Body of pancreas (tissue), 4 donors: ENCODE measurements at regions of chr10 and their contacts with region 1.

Region 1: DNA sequence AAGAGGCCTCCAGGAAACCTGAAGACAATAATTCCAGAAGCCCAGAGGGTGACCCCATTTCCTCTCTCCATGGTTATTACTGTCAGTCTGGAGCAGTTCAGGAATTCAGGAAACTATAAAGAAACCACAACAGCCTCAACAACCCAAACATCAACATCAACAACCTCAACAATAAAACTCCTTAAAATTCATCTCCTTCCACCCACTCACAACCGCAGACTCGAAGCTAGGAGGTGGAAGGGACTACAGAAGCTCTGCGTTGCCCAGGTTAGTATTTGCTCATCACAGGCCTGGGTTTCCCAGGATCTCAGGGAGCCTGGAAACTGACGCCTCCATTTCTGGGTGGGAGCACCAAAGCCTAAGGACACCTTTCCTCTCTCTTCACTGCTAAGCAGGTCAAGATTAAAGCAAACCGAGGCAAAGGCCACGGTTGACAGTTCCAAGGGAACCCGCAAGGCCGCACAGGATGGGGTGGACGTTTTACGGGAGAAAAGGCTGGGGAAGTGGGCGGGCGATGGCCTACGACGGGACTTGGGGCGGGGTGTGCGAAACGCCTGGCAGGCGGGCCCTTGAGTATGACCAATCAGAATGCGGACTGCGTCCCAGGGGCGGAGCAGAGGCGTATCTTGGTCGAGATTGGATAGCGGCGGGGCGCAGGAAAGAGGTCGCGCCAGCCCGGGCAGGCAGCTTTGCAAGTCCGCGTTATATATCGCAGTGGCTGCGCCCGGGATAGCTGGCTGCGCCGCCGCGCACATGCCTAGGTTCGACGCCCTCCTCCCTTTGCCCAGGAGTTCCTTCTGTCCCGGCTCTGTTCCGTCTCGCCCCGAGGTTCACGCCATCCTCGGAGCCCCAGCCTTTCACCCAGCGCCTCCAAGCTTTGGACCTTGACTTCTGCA is at the start of gene ELOVL3:
- DNase-seq: peak; percentile 92 to 96 (median 94)
- ATAC-seq: peak; percentile 94
- H3K4me3 ChIP-seq: no peak within 1 kb of the TSS
- H3K27ac ChIP-seq: peak within 1 kb of the TSS in 3 of 4 donors; percentile 34 to 60 (median 47)
- H3K4me1 ChIP-seq: peaks cover 25% of the 10 kb centered on the region
- H3K27me3 ChIP-seq: peaks cover 0 to 4% of the 10 kb centered on the region in 2 donors
- CTCF ChIP-seq: peak in 3 of 7 experiments; percentile 17 to 29 (median 20)
- POLR2A ChIP-seq: peak in 1 of 3 donors; percentile 29
- total RNA-seq, gene ELOVL3: not detected

Region 2: DNA sequence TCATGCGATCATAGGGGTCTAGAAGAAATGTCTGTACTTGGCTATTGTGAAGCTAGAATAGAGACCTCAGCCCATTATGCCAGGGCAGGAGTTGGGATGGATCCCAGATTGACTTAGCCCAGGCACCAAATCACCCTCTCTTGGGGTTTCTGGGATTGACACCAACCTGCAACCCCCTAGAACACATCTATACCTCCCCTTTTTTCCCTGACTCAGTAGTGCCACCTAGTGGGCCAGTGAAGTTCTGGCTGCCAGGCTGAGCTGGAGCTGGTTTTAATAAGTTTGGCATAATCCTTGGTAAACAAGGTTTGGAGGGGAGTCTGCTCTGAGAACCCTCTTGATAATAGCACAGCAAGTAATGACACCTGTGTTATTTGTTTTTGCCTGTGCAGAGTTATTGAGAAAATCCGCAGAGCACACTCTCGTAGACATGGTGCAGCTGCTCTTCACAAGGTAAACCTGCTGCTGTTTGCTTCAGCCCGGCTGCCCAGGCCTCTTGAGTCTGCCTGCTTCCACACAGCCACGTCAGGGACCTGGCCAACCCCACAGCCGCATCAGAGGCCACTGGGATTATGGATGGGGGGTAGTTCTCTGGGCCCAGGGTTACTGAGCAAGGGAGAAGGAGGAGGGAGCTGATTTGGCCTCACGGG is 126.3 kb after region 1 on chr10:
- intact Hi-C with region 1: loop called (anchors 5 kb)
- DNase-seq: peak; percentile 45 to 67 (median 52)
- ATAC-seq: peak; percentile 57
- H3K4me3 ChIP-seq: no peak overlapping the region
- H3K27ac ChIP-seq: no peak overlapping the region
- H3K4me1 ChIP-seq: no peaks in the 10 kb centered on the region
- H3K27me3 ChIP-seq: no peaks in the 10 kb centered on the region
- CTCF ChIP-seq: peak; percentile 71 to 91 (median 83)
- POLR2A ChIP-seq: no peak

Region 3: GRCh38 chr10:102485093-102485784 is 259.3 kb after region 1 on chr10:
- intact Hi-C with region 1: loop called (anchors 10 kb)
- DNase-seq: no peak
- ATAC-seq: no peak
- H3K4me3 ChIP-seq: no peak overlapping the region
- H3K27ac ChIP-seq: no peak overlapping the region
- H3K4me1 ChIP-seq: no peaks in the 10 kb centered on the region
- H3K27me3 ChIP-seq: no peaks in the 10 kb centered on the region
- CTCF ChIP-seq: no peak
- POLR2A ChIP-seq: no peak

Region 4: DNA sequence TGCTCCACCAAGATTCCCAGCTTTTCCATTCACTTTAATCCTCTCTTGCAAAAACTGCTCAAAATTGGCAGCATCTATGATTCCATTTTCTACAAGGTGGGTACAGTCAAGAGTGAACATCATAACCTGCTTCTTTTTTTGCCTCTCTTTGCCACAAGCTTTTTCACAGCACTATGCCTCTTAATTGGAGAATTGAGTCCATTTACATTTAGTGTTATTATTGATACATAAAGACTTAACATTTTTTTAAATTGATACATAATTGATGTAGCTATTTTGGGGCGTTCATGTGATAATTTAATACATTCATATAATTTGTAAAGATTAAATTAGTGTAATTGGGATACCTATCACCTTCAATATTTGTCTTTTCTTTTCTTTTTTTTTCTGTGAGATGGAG is 662.2 kb after region 1 on chr10:
- intact Hi-C with region 1: no loop called
- DNase-seq: no peak
- ATAC-seq: no peak
- H3K4me3 ChIP-seq: no peak overlapping the region
- H3K27ac ChIP-seq: no peak overlapping the region
- H3K4me1 ChIP-seq: no peaks in the 10 kb centered on the region
- H3K27me3 ChIP-seq: no peaks in the 10 kb centered on the region
- CTCF ChIP-seq: no peak
- POLR2A ChIP-seq: no peak